Posterior vena cava (tissue), 2 donors: ENCODE measurements at regions of chr1 and their contacts with region 1.

Region 1: GRCh38 chr1:214328770-214329469 is 48.0 kb downstream of the SMYD2 start:
- DNase-seq: peak; percentile 89

Region 2: DNA sequence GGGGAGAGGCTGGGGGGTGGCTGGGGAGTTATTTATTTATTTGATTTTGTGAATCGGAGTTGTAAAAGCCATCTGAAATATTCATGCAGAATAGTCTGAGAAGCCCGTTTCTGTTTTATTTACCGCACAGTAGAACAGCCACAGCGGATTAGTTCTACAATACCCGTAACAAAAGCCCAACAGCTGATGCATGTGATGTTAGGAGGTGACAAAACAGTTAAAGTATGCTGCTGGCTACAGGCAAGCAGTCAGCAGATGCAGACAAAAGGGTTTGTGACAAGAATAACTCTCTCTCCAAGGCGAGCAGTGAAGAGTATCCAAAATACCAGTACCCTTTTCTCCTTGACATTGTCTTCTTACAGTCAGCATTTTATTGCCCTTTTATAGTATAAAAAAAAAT is 299.1 kb before region 1 on chr1:
- intact Hi-C with region 1: no loop called
- DNase-seq: no peak

Region 3: GRCh38 chr1:214261206-214262123 is 67.5 kb before region 1 on chr1:
- intact Hi-C with region 1: loop called (anchors 2 to 5 kb)
- DNase-seq: peak; percentile 92

Region 4: DNA sequence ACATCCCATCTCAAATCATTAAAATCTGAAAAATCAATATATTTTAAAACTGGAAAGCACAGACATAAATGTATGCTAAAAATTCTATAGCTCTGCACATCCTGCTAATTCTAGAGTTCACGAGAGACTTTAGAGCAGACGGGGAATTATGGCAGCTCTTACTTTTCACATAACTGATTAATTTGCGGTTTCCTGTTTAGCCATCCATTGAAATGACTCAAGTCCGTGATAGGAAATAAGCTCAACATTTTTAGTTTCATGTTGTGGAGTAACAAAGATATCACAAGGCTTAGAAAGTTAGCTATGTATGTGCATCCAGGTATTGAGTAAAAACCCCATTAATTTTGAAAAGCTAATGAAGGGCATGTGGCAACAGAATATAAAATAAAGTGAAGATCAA is 75.2 kb after region 1 on chr1:
- intact Hi-C with region 1: no loop called
- DNase-seq: no peak

Region 5: DNA sequence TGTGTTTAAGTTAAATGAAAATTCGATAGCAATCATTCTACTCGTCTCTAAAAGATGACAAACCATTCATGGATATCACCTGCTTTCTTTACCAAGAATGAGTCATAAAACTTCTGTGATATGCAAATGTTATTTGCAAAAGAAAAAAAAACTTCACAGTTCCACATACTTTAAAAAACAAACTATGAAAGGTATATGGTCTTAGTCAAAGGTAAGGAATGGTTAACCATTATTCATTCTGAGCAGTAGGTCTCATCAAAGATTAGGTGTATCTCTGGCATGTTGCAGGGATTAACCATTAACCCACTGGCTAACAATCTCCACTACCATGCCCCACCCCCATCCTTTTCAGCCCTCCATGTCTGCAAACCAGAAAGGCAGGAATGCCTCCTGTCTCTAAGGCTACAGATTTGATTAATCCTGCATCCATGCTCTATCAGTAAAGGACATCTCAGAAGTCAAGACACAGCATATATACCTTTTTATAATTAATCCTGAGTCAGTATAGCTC is 178.1 kb after region 1 on chr1:
- intact Hi-C with region 1: no loop called
- DNase-seq: no peak